Psoas muscle (tissue), 8 donors: ENCODE measurements at regions of chr1 and their contacts with region 1.

Region 1: DNA sequence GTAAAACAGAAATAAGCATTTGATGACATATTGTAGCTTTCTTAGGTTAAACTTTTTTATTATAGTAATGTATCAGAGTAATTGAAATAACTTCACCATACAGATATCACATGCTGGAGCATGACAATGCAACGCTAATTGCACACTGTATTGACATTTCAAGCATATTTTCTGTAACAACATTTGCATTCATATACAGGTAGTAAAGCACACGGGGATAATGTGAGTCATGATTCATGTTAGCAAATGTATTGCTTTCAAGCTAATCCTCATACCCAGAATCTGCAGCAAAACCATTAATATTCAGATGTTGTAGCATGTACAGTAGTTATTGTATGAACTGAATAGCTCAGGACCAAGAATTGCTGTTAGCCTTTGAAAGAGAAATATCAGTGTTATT is 133.9 kb downstream of the TTLL7 start:
- DNase-seq: no peak
- ATAC-seq: no peak
- H3K4me3 ChIP-seq: no peak overlapping the region
- H3K27ac ChIP-seq: no peak overlapping the region
- H3K4me1 ChIP-seq: no peaks in the 10 kb centered on the region
- H3K27me3 ChIP-seq: peaks cover 0 to 3% (median 0%) of the 10 kb centered on the region in 3 donors
- CTCF ChIP-seq: no peak

Region 2: DNA sequence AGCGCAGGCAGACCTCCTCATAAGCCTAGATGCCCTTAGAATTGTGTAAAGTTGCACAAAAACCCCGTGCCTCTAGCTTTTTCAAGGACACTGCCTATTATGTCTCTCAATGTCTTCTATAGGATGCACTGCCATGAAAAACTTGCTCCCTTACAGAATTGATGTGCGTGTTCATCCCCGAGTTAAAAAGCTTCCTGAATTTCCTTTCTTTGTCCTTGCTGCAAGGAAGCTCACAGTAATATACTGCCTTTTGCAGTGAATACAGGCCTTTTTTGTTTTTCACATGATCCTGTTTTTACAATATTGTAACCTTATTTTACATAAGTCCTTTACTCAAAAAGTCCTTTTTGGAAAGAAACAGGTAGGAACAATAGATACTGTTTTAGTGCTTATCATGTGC is 59.1 kb before region 1 on chr1:
- intact Hi-C with region 1: loop called in 1 of 2 experiments (anchors 2 kb)
- DNase-seq: no peak
- ATAC-seq: no peak
- H3K4me3 ChIP-seq: no peak overlapping the region
- H3K27ac ChIP-seq: no peak overlapping the region
- H3K4me1 ChIP-seq: no peaks in the 10 kb centered on the region
- H3K27me3 ChIP-seq: no peaks in the 10 kb centered on the region
- CTCF ChIP-seq: no peak